Gastrocnemius medialis (tissue), 4 donors: ENCODE measurements at regions of chr22 and their contacts with region 1.

Region 1: GRCh38 chr22:26502688-26503561 is 9.3 kb downstream of the TFIP11 start:
- DNase-seq: peak; percentile 87 to 91
- ATAC-seq: peak; percentile 84 to 91
- H3K4me3 ChIP-seq: peak overlapping the region in 2 of 4 donors; percentile 22 to 32
- H3K27ac ChIP-seq: peak overlapping the region; percentile 84 to 94 (median 88)
- H3K4me1 ChIP-seq: peaks cover 34 to 53% of the 10 kb centered on the region in 2 donors
- H3K27me3 ChIP-seq: no peaks in the 10 kb centered on the region
- CTCF ChIP-seq: peak; percentile 46 to 67 (median 60)
- POLR2A ChIP-seq: no peak

Region 2: GRCh38 chr22:26483439-26484359 is 19.2 kb before region 1 on chr22 and contains the starts of genes HPS4 and SRRD:
- in situ Hi-C with region 1: no loop called
- intact Hi-C with region 1: loop called (anchors 2 kb)
- DNase-seq: peak; percentile 75 to 86
- ATAC-seq: peak; percentile 80 to 90
- H3K4me3 ChIP-seq: peak within 1 kb of the TSS; percentile 76 to 99 (median 86)
- H3K27ac ChIP-seq: peak within 1 kb of the TSS; percentile 93 to 100 (median 94)
- H3K4me1 ChIP-seq: peaks cover 54 to 60% of the 10 kb centered on the region in 2 donors
- H3K27me3 ChIP-seq: no peaks in the 10 kb centered on the region
- CTCF ChIP-seq: peak in 1 of 5 experiments; percentile 29
- POLR2A ChIP-seq: peak; percentile 95
- total RNA-seq, gene HPS4: 7.0 to 13.9 (median 10.5) TPM
- total RNA-seq, gene SRRD: 24.0 to 53.1 (median 27.4) TPM

Region 3: DNA sequence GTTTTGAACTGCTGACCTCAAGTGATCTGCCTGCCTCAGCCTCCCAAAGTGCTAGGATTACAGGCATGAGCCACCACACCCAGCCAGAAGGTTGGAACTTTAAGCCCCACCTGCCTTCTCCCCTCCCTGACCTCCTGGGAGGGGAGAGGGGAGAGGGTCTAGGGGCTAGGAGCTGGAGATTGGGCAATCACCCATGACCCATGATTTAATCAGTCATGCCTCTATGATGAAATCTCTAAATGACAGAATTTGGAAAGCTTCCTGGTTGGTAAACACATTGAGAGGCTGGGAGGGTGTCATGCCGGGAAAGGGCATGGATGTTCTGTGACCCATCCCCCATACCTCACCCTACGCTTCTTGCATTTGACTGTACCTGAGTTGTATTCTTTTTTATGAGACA is 26.4 kb after region 1 on chr22:
- in situ Hi-C with region 1: no loop called
- intact Hi-C with region 1: loop called (anchors 1 kb)
- DNase-seq: peak; percentile 65 to 79
- ATAC-seq: peak; percentile 69
- H3K4me3 ChIP-seq: no peak overlapping the region
- H3K27ac ChIP-seq: peak overlapping the region; percentile 91 to 98 (median 94)
- H3K4me1 ChIP-seq: peaks cover 59 to 60% of the 10 kb centered on the region in 2 donors
- H3K27me3 ChIP-seq: no peaks in the 10 kb centered on the region
- CTCF ChIP-seq: no peak
- POLR2A ChIP-seq: no peak

Region 4: GRCh38 chr22:26542831-26543230 is 39.9 kb after region 1 on chr22:
- in situ Hi-C with region 1: no loop called
- intact Hi-C with region 1: no loop called
- DNase-seq: no peak
- ATAC-seq: no peak
- H3K4me3 ChIP-seq: no peak overlapping the region
- H3K27ac ChIP-seq: peak overlapping the region in 1 of 4 donors; percentile 86
- H3K4me1 ChIP-seq: peaks cover 33 to 46% of the 10 kb centered on the region in 2 donors
- H3K27me3 ChIP-seq: no peaks in the 10 kb centered on the region
- CTCF ChIP-seq: no peak
- POLR2A ChIP-seq: no peak

Region 5: DNA sequence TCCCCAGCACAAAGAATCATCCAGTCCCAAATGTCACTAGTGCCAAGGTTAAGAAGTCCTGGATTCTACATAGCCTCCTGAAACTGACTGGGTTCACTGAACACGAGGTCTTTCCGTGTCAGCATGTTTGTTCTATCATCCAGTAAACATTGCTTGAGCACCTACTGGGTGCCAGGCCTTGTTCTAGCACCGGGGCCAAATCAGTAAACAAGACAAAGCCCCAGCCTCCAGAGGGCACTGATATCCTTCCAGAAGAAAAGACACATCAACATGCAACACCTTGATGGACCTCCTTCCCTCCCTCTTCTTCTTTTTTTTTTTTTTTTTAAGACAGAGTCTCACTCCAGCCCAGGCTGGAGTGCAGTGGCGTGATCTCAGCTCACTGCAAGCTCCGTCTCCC is 60.1 kb after region 1 on chr22:
- in situ Hi-C with region 1: no loop called
- intact Hi-C with region 1: loop called (anchors 1 kb)
- DNase-seq: peak in 1 of 2 donors; percentile 38
- ATAC-seq: peak in 1 of 2 donors; percentile 46
- H3K4me3 ChIP-seq: no peak overlapping the region
- H3K27ac ChIP-seq: peak overlapping the region; percentile 84 to 92 (median 88)
- H3K4me1 ChIP-seq: peaks cover 50 to 52% of the 10 kb centered on the region in 2 donors
- H3K27me3 ChIP-seq: no peaks in the 10 kb centered on the region
- CTCF ChIP-seq: peak in 1 of 5 experiments; percentile 13
- POLR2A ChIP-seq: no peak